Mammary epithelial cell (primary cell): ENCODE measurements at regions of chr15 and their contacts with region 1.

Region 1: GRCh38 chr15:79221691-79222090 is 60.8 kb upstream of the ANKRD34C start:
- DNase-seq: no peak
- H3K4me3 ChIP-seq: no peak overlapping the region
- H3K27ac ChIP-seq: no peak overlapping the region
- H3K4me1 ChIP-seq: no peaks in the 10 kb centered on the region
- H3K27me3 ChIP-seq: no peaks in the 10 kb centered on the region
- CTCF ChIP-seq: no peak

Region 2: GRCh38 chr15:79160211-79160610 is 61.5 kb before region 1 on chr15:
- CTCF ChIA-PET with region 1: no interaction called
- dilution Hi-C with region 1: no loop called
- in situ Hi-C with region 1: no loop called
- intact Hi-C with region 1: no loop called
- DNase-seq: peak; percentile 77
- H3K4me3 ChIP-seq: no peak overlapping the region
- H3K27ac ChIP-seq: no peak overlapping the region
- H3K4me1 ChIP-seq: peaks cover 18% of the 10 kb centered on the region
- H3K27me3 ChIP-seq: no peaks in the 10 kb centered on the region
- CTCF ChIP-seq: no peak

Region 3: GRCh38 chr15:79283252-79284048 is 61.8 kb after region 1 on chr15:
- CTCF ChIA-PET with region 1: no interaction called
- dilution Hi-C with region 1: no loop called
- in situ Hi-C with region 1: loop called in 1 of 2 experiments (anchors 10 kb)
- intact Hi-C with region 1: no loop called
- DNase-seq: peak; percentile 37
- H3K4me3 ChIP-seq: no peak overlapping the region
- H3K27ac ChIP-seq: no peak overlapping the region
- H3K4me1 ChIP-seq: no peaks in the 10 kb centered on the region
- H3K27me3 ChIP-seq: peaks cover 29% of the 10 kb centered on the region
- CTCF ChIP-seq: no peak